ENCODE measurements at regions of chr15 and their contacts with region 1.

Region 1: GRCh38 chr15:75988989-75989388 is 23.2 kb downstream of the NRG4 start:
- DNase-seq: no peak

Region 2: DNA sequence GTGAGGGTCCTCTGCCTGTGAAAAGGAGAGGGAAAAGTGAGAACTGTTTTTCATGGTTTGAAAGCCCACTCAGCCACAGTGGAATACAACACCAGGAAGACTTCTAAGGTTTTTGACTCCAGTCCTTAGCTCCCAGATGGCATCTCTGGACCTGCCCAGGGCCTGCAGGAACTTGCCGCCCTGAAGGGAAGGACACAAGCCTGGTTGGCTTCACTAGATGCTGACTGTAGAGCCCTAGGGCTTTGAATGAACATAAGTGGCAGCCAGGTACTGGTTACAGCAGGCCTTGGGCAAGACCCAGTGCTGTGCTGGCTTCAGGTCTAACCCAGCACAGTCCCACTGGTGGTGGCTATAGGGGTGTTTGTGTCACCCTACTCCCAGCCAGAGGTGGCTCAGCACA is 49.5 kb after region 1 on chr15:
- CTCF ChIA-PET with region 1: interaction called, 11 read pairs
- POLR2A ChIA-PET with region 1: no interaction called
- DNase-seq: no peak

Region 3: DNA sequence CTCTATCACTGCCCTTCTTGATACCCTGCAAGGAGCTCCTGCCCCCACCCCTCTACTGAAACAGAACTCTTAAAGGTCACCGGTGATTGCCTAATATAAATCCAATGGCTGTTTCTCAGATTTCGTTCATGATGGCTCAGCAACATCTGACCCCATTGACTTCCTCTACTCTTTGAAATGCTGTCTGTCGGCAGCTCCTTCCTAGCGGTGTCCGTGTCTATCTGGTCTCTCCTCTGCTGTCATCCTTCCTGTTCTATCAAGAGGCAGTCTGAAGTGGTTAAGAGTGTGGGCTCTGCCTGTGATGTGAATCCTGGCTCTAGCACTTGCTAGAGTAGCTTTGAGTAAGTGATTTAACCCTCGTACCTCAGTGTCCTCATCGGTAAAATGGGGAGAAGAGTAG is 76.3 kb after region 1 on chr15:
- CTCF ChIA-PET with region 1: no interaction called
- POLR2A ChIA-PET with region 1: no interaction called
- DNase-seq: no peak

Region 4: GRCh38 chr15:76258471-76258870 is 269.5 kb after region 1 on chr15:
- CTCF ChIA-PET with region 1: no interaction called
- POLR2A ChIA-PET with region 1: no interaction called
- DNase-seq: no peak